ENCODE measurements at regions of chr11 and their contacts with region 1.

Region 1: DNA sequence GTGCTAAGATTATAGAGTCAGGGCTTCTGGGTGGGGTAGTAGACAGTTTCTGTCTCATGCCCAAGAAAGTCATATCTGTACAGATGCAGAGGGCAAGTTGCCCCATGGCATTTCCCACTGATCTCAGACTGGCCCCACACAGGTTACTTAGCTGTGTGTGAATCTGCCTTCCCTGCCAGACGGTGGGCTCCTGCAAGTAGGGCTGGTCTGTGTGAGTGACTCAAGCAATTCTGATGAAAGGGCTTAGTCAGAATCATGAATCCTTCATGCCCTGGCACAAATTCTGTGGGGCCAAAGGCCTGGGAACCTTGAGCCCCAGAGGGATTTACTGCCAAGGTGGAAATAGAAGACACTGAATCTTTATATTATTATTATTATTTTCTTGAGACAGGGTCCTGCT is 30.4 kb downstream of the USH1C start:
- DNase-seq: no peak
- H3K4me3 ChIP-seq: no peak overlapping the region
- H3K27ac ChIP-seq: no peak overlapping the region
- H3K4me1 ChIP-seq: peaks cover 0 to 2% (median under 1%) of the 10 kb centered on the region in 4 experiments; a peak in 5 of 7 replicates
- H3K27me3 ChIP-seq: no peaks in the 10 kb centered on the region
- CTCF ChIP-seq: no peak
- EP300 ChIP-seq: no peak
- POLR2A ChIP-seq: no peak
- RAD21 ChIP-seq: no peak

Region 2: GRCh38 chr11:17489751-17490150 is 24.1 kb before region 1 on chr11:
- CTCF ChIA-PET with region 1: interaction called, 11 read pairs
- POLR2A ChIA-PET with region 1: no interaction called
- DNase-seq: no peak
- H3K4me3 ChIP-seq: no peak overlapping the region
- H3K27ac ChIP-seq: no peak overlapping the region
- H3K4me1 ChIP-seq: no peaks in the 10 kb centered on the region; a peak in 1 of 7 replicates
- H3K27me3 ChIP-seq: 0 out of 7 replicates have a peak, but pooled peaks cover 0 to 2% (median 0%) of the 10 kb centered on the region in 4 experiments
- CTCF ChIP-seq: no peak
- EP300 ChIP-seq: no peak
- POLR2A ChIP-seq: no peak
- RAD21 ChIP-seq: no peak

Region 3: GRCh38 chr11:17498475-17498874 is 15.4 kb before region 1 on chr11:
- CTCF ChIA-PET with region 1: interaction called, 494 read pairs
- POLR2A ChIA-PET with region 1: no interaction called
- DNase-seq: peak in 1 of 2 experiments; percentile 52
- H3K4me3 ChIP-seq: no peak overlapping the region
- H3K27ac ChIP-seq: no peak overlapping the region
- H3K4me1 ChIP-seq: peaks cover 0 to 6% (median 2%) of the 10 kb centered on the region in 4 experiments; a peak in 3 of 7 replicates
- H3K27me3 ChIP-seq: no peaks in the 10 kb centered on the region; a peak in 2 of 7 replicates
- CTCF ChIP-seq: peak; percentile 48 to 61 (median 57); a peak in 3 of 4 replicates
- EP300 ChIP-seq: no peak
- POLR2A ChIP-seq: no peak
- RAD21 ChIP-seq: peak in 1 of 2 experiments; percentile 23; a peak in 1 of 4 replicates

Region 4: GRCh38 chr11:17554487-17554886 is 40.6 kb after region 1 on chr11:
- CTCF ChIA-PET with region 1: no interaction called
- POLR2A ChIA-PET with region 1: no interaction called
- DNase-seq: no peak
- H3K4me3 ChIP-seq: no peak overlapping the region
- H3K27ac ChIP-seq: no peak overlapping the region
- H3K4me1 ChIP-seq: no peaks in the 10 kb centered on the region
- H3K27me3 ChIP-seq: no peaks in the 10 kb centered on the region
- CTCF ChIP-seq: peak in 2 of 3 experiments; percentile 2 to 23; a peak in 2 of 4 replicates
- EP300 ChIP-seq: no peak
- POLR2A ChIP-seq: no peak
- RAD21 ChIP-seq: no peak

Region 5: DNA sequence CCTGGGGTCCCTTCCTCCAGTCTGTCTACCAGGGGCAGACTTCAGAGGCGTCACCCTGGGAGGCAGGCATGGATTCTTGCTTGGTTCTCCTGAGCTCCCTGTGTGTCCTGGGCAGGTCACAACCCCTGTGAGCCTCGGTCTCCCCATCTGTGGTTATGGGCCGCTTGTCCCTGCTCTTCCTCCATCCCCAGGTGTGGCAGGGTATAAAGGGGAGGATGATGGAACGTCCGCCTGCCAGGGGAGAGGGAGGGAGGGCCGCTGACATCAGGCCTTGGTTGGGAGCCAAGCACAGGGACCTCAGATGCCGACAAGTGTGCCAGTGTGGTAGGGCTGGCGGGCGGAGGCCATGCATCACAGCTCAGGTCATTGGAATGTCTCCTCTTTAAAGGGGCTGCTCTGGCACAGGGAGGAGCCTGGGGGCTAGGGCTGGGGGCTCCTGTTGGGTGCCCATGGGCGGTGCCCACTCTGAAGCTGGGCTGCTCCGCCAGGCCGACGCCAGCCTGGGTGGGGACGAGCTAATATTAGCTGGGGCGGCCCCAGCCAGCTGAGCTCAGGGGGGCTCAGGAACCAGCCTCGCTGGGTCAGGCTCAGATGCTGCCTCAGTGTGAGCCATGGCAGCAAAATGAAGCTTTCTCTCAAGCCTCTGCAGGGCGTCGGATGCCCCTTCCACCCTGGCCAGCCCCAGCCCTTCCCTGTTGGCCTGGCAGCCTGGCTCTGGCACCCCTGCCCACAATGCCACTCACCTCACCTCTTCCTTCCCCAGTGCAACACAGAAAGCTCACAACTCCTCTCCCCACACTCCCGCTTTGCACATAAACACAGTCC is 233.5 kb after region 1 on chr11:
- CTCF ChIA-PET with region 1: no interaction called
- POLR2A ChIA-PET with region 1: no interaction called
- DNase-seq: no peak
- H3K4me3 ChIP-seq: no peak overlapping the region
- H3K27ac ChIP-seq: no peak overlapping the region
- H3K4me1 ChIP-seq: no peaks in the 10 kb centered on the region
- H3K27me3 ChIP-seq: no peaks in the 10 kb centered on the region; a peak in 1 of 7 replicates
- CTCF ChIP-seq: no peak
- EP300 ChIP-seq: no peak
- POLR2A ChIP-seq: no peak
- RAD21 ChIP-seq: no peak

Measured in H1 (cell line).